ENCODE measurements at regions of chr18 and their contacts with region 1.

Region 1: GRCh38 chr18:36688020-36688965 is 140.5 kb downstream of the TPGS2 start:
- DNase-seq: peak in 1 of 2 donors; percentile 73
- ATAC-seq: peak; percentile 71

Region 2: DNA sequence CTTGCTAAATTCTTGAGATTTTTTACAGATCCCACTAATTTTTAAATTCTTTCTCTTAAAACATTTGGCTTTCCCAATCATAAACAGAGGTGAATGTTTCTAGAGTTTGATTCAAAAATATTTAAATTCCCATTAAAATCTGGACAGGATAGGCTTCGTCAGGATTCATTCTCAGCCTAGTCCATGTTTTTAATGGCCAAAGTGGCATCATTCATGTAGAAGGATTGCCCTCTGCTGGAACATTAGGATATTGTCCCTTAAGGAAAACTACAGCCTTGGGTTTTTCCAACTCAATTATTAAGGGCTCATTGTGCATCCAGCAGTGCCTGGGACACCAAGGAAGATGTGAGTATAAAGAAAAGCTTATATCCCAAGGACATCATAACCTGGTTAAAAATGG is 68.8 kb after region 1 on chr18:
- intact Hi-C with region 1: loop called in 1 of 2 experiments (anchors 5 kb)
- DNase-seq: no peak
- ATAC-seq: peak; percentile 75

Region 3: DNA sequence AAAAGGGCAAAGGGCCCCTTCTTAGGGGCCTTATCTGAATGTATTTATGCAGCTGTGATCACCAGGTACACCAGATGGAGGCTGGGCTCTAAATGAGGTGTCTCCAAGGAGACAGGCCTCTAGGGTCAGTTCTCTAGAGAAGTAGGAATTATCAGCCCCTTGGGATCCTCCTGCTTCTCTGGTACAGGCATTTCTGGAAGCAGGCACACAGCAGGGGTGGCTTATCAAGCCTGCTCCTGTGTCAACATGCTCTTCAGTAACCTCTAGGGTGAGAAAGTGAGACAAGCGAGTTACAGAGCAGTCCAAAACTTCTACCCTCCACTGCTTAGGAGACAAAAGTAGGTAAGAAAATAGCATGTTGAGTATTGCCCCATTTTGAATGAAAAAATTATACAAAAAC is 126.7 kb after region 1 on chr18:
- intact Hi-C with region 1: no loop called
- DNase-seq: no peak
- ATAC-seq: no peak